Gastrocnemius medialis (tissue), 4 donors: ENCODE measurements at regions of chr9 and their contacts with region 1.

Region 1: GRCh38 chr9:99762470-99762869 is 59.2 kb upstream of the NR4A3 start:
- DNase-seq: no peak
- ATAC-seq: no peak
- H3K4me3 ChIP-seq: no peak overlapping the region
- H3K27ac ChIP-seq: no peak overlapping the region
- H3K4me1 ChIP-seq: no peaks in the 10 kb centered on the region
- H3K27me3 ChIP-seq: no peaks in the 10 kb centered on the region
- CTCF ChIP-seq: no peak
- POLR2A ChIP-seq: no peak

Region 2: DNA sequence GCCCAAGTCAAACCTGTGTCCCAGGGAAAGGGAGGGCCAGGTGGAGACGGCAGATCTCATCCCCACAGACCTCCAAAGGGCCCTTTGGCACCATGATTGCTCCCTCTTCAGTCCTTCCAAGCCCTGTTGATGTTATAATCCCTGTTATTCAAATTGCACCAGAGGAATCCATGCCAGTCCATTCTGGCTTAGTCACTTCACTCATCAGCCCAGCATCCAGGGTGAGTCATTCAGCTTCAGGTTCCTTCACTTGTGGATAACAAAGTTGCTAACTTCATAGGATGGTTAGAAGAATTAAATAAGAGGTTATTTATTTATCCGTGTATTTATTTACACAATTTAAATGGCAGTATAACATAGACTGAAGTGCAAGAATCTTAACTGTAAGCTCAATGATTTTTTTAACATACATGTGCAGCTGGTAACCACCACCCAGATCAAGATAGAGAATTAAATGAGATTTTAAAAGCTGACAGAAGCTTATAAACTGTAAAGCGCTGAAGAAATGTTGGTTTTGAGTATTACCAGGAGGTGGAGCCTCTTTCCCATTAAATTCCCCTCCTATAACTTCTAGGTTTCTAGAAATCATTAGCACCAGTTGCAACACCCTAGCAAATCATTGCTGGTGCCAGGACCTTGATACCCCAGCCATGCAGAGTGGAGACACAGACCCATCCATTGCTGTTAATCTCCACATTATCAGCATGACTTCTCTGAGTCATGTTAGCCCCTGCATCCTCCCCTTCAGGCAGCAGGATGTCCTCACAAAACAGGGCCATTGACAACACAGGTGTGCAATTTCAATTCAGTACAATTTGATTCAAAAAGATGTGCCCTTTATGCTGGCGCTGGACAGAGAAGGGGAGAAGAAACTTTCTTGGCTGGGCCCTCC is 463.0 kb before region 1 on chr9:
- in situ Hi-C with region 1: no loop called
- intact Hi-C with region 1: no loop called
- DNase-seq: peak in 1 of 2 donors; percentile 20
- ATAC-seq: peak; percentile 79 to 91
- H3K4me3 ChIP-seq: no peak overlapping the region
- H3K27ac ChIP-seq: peak overlapping the region in 1 of 4 donors; percentile 11
- H3K4me1 ChIP-seq: peaks cover 0 to 5% of the 10 kb centered on the region in 2 donors
- H3K27me3 ChIP-seq: no peaks in the 10 kb centered on the region
- CTCF ChIP-seq: peak in 1 of 5 experiments; percentile 23
- POLR2A ChIP-seq: no peak

Region 3: DNA sequence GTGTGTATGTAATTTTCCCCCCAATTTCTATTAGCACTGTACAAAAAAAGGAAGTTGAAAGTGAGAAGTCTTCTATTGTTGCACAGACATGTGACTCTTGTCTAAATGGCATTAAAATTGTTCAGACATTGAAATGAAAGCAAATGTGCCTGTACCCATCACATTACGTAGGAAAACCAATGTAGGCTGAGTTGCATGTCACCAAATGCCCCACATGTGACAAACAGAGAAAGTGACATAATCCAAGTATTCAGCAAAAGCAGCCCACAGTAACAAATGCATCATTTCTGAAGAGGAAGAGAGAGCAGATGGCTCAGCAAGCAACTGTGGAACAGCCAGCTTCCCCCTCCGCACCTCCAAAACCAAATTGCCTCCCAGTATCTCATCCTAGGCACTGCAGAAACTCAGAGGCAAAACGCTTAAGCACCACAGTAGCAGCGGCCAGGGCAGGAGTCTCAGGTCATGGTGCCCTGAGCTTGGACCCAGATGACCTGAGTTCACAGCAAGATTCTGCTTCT is 102.2 kb before region 1 on chr9:
- in situ Hi-C with region 1: loop called in 1 of 4 experiments (anchors 25 kb)
- intact Hi-C with region 1: no loop called
- DNase-seq: no peak
- ATAC-seq: no peak
- H3K4me3 ChIP-seq: no peak overlapping the region
- H3K27ac ChIP-seq: no peak overlapping the region
- H3K4me1 ChIP-seq: no peaks in the 10 kb centered on the region
- H3K27me3 ChIP-seq: no peaks in the 10 kb centered on the region
- CTCF ChIP-seq: no peak
- POLR2A ChIP-seq: no peak